CD8-positive, alpha-beta T cell (primary cell): ENCODE measurements at regions of chr7 and their contacts with region 1.

Region 1: DNA sequence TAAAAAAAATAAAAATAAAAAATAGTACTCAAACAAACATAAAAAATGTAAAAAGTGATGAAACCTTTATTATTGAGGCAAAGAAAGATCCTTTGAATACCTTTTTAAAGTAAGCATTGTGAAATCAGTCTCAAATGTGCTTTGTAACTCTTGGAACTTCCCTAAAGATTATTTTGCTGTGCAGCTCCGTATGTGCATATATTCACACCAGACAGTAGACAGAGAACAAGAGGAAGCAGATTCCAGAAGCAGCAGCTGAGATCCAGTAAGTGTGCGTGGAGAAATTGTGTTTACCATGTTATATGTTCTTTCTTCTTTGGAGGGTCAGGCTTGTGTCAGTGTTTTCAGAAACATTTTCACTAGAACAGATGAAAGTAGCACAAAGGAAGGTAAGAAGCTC is 324.9 kb downstream of the AGMO start:
- DNase-seq: no peak
- ATAC-seq: no peak
- H3K4me3 ChIP-seq: no peak overlapping the region
- H3K4me3 Mint-ChIP-seq: no peak overlapping the region
- H3K27ac ChIP-seq: no peak overlapping the region
- H3K27ac Mint-ChIP-seq: no peak overlapping the region
- H3K4me1 ChIP-seq: no peaks in the 10 kb centered on the region
- H3K4me1 Mint-ChIP-seq: no peaks in the 10 kb centered on the region
- H3K27me3 ChIP-seq: no peaks in the 10 kb centered on the region
- H3K27me3 Mint-ChIP-seq: no peaks in the 10 kb centered on the region
- CTCF ChIP-seq: no peak

Region 2: GRCh38 chr7:14973712-14974428 is 263.1 kb before region 1 on chr7:
- CTCF ChIA-PET with region 1: no interaction called
- POLR2A ChIA-PET with region 1: no interaction called
- intact Hi-C with region 1: no loop called
- DNase-seq: no peak
- ATAC-seq: no peak
- H3K4me3 ChIP-seq: no peak overlapping the region
- H3K4me3 Mint-ChIP-seq: no peak overlapping the region
- H3K27ac ChIP-seq: no peak overlapping the region
- H3K27ac Mint-ChIP-seq: no peak overlapping the region
- H3K4me1 ChIP-seq: no peaks in the 10 kb centered on the region
- H3K4me1 Mint-ChIP-seq: no peaks in the 10 kb centered on the region
- H3K27me3 ChIP-seq: no peaks in the 10 kb centered on the region
- H3K27me3 Mint-ChIP-seq: no peaks in the 10 kb centered on the region
- CTCF ChIP-seq: no peak

Region 3: GRCh38 chr7:15104411-15105092 is 132.4 kb before region 1 on chr7:
- CTCF ChIA-PET with region 1: no interaction called
- POLR2A ChIA-PET with region 1: no interaction called
- intact Hi-C with region 1: loop called in 1 of 2 experiments (anchors 5 kb)
- DNase-seq: no peak
- ATAC-seq: no peak
- H3K4me3 ChIP-seq: no peak overlapping the region
- H3K4me3 Mint-ChIP-seq: no peak overlapping the region
- H3K27ac ChIP-seq: no peak overlapping the region
- H3K27ac Mint-ChIP-seq: no peak overlapping the region
- H3K4me1 ChIP-seq: no peaks in the 10 kb centered on the region
- H3K4me1 Mint-ChIP-seq: no peaks in the 10 kb centered on the region
- H3K27me3 ChIP-seq: no peaks in the 10 kb centered on the region
- H3K27me3 Mint-ChIP-seq: no peaks in the 10 kb centered on the region
- CTCF ChIP-seq: no peak

Region 4: GRCh38 chr7:15326044-15326644 is 89.2 kb after region 1 on chr7:
- CTCF ChIA-PET with region 1: no interaction called
- POLR2A ChIA-PET with region 1: no interaction called
- intact Hi-C with region 1: no loop called
- DNase-seq: no peak
- ATAC-seq: no peak
- H3K4me3 ChIP-seq: no peak overlapping the region
- H3K4me3 Mint-ChIP-seq: no peak overlapping the region
- H3K27ac ChIP-seq: no peak overlapping the region
- H3K27ac Mint-ChIP-seq: no peak overlapping the region
- H3K4me1 ChIP-seq: no peaks in the 10 kb centered on the region
- H3K4me1 Mint-ChIP-seq: no peaks in the 10 kb centered on the region
- H3K27me3 ChIP-seq: no peaks in the 10 kb centered on the region
- H3K27me3 Mint-ChIP-seq: no peaks in the 10 kb centered on the region
- CTCF ChIP-seq: no peak